H1 (cell line): ENCODE measurements at regions of chr1 and their contacts with region 1.

Region 1: DNA sequence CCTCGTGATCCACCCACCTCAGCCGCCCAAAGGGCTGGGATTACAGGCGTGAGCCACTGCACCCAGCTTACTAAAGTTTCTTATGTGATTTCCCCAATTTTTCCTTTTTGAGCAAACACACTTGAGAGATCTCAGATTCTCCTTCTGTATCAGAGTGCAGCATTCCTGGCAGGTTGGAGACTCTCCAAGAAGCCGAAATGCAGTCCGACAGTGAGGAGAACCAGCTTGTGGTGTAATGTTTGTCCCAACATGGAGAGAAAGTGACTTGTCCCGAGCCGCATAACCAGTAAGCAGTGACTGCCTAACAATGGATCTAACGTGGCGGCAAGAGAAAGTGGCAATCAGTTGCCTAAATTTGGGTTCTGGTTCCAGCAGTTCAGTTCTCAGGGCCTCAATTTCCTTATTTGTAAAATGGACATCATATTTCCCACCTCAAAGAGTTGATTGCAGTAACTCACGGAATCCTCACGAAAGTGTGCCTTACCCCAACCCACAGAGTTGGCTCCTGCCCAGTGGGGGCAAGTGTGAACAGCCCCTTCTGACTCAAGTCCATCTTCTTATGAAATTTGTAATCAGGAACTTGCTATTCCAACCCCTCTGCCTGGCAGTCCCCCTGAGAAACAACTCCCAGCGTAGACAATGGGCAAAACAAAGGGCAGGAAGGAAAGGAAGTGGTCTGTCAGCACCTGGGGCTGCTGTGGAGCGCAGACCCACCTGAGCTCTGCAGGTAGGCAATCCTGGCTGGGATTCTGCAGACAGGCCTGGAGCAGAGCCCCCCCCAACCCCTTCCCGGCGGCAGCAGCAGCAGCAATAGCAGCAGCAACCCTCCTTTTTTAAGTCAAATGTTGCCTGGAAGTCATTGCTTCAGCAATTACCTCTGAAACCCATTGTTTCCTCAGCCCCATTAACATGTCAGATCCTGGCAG is 223.6 kb upstream of the POU3F1 start:
- DNase-seq: peak; percentile 76 to 85
- H3K4me3 ChIP-seq: peak overlapping the region in 1 of 4 experiments; percentile 25; a peak in 1 of 8 replicates
- H3K27ac ChIP-seq: peak overlapping the region; percentile 85; the same call in 1 of the 2 replicates
- H3K4me1 ChIP-seq: peaks cover 16 to 40% (median 26%) of the 10 kb centered on the region in 4 experiments
- H3K27me3 ChIP-seq: no peaks in the 10 kb centered on the region; a peak in 1 of 7 replicates
- CTCF ChIP-seq: no peak
- EP300 ChIP-seq: peak in 1 of 2 experiments; percentile 92; a peak in 2 of 3 replicates
- POLR2A ChIP-seq: no peak
- RAD21 ChIP-seq: peak; percentile 28 to 50

Region 2: DNA sequence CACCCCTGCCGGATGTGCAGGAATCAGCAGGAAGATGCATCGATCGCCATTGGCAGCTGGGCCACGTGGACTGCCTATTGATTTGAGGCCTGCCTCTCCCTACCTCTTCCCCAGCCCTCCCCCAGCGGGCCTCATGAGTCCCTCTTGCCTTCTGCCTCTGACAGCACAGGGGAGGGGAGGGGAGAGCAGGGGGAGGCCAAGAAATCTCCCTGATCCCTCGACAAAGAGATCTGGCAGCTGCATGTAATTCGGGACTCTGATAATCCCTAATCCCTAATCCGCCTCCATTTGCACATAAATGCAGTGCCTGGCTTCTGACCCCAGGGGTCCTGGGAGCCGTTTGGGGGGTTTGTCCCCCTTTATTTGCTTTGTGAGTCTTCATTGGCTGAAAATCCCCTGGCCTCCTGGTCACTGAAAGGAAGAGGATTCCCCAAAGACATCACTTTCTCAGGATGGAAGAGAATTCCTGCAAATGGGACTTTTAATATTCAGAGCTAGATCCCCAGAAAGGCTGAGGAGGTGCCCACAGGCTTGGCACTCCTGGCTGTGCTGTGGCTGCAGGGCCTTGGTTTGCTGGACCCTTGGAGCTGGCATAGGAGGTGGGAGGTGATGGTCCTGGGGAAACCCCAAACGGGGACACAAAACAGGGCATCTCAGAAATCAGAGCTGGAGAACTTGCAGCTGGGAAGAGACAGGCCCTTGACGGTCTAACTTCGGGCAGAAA is 15.8 kb after region 1 on chr1:
- CTCF ChIA-PET with region 1: interaction called, 6 read pairs
- POLR2A ChIA-PET with region 1: interaction called, 15 read pairs
- DNase-seq: peak; percentile 53 to 56
- H3K4me3 ChIP-seq: no peak overlapping the region
- H3K27ac ChIP-seq: no peak overlapping the region; the same call in 1 of the 2 replicates
- H3K4me1 ChIP-seq: peaks cover 3 to 25% (median 12%) of the 10 kb centered on the region in 4 experiments
- H3K27me3 ChIP-seq: peaks cover 0 to 2% (median 0%) of the 10 kb centered on the region in 4 experiments; a peak in 2 of 7 replicates
- CTCF ChIP-seq: no peak
- EP300 ChIP-seq: no peak
- POLR2A ChIP-seq: no peak
- RAD21 ChIP-seq: peak in 1 of 2 experiments; percentile 3; a peak in 1 of 4 replicates